Posterior vena cava (tissue), 2 donors: ENCODE measurements at regions of chr1 and their contacts with region 1.

Region 1: DNA sequence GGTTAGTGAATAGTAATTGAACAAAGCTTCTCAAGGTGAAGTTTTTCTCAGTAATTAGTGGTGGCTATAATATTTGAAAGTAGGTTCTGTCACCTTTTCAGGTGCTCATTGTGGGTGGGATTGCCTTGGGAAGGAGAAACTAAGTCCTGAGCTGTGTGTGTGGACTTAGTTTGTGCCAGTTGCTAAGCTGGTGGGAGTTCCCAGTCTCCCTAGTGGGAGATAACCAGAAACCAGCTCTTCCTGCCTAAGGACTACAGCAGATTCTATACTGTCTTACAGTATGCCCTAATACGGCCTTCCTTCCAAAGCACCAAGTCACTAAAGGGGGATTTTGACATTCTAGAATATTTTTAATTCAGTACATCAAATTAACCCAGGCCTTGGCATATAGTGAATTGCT is 94.3 kb downstream of the PTBP2 start:
- DNase-seq: no peak

Region 2: GRCh38 chr1:96790599-96790998 is 25.3 kb before region 1 on chr1:
- intact Hi-C with region 1: no loop called
- DNase-seq: no peak

Region 3: GRCh38 chr1:96840396-96840795 is 24.5 kb after region 1 on chr1:
- intact Hi-C with region 1: loop called in 1 of 2 experiments (anchors 1 kb)
- DNase-seq: no peak

Region 4: DNA sequence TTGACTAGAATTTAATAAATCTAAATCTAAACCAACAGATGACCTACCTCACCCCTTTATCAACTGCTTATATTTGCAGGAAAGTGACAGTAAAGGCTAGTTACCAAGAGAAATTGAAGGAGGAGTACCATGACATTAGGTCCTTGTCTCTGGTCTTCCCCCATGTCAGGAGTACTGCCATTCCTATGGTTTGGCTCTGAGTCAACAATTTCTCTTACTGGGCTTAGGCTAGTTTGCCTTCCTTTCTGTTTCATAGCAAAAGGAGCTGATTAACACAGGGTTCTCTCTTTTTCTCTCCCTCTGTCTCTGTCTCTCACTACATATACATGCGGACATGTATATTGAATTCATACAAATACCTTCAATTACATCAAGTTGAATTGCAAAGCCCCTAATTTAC is 525.0 kb after region 1 on chr1:
- intact Hi-C with region 1: loop called in 1 of 2 experiments (anchors 5 kb)
- DNase-seq: no peak